Common myeloid progenitor, CD34-positive (primary cell): ENCODE measurements at regions of chr4 and their contacts with region 1.

Region 1: DNA sequence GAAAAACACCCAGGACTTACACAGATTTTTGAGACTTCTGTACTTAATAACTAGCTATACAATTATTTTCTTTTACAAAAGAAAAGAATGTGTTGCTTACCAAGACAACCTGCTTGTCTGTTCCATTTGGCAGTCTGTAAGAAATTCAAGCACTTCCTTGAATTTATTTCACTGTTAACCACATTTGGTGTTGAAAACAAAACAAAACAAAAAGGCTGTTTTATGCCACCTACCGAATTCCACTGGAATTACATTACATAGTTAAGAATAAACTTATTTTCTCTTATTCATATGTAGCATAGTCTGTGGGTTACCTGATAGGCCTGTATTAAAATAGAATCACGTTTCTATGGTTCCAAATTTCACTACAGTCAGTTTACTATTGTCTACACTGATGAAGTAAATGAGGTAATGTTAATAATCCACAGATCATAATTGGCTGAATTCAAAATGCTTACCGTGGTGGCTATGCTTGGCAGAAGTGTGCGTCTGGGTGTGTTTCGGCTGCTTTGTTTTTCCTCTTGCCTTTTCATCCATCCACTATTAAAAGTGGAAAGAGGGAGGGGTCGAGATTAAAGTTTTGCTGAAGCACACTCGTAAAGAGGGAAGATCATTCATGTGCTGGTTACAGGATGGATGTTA is at the start of gene TLR1:
- DNase-seq: peak; percentile 73 to 92 (median 92)
- H3K4me3 ChIP-seq: peak within 1 kb of the TSS in 6 of 7 experiments; percentile 58 to 78 (median 73)
- H3K27ac ChIP-seq: peak within 1 kb of the TSS; percentile 73 to 82
- H3K4me1 ChIP-seq: peaks cover 14 to 31% (median 24%) of the 10 kb centered on the region in 4 experiments
- H3K27me3 ChIP-seq: no peaks in the 10 kb centered on the region

Region 2: GRCh38 chr4:38788327-38788726 is 16.4 kb before region 1 on chr4:
- CTCF ChIA-PET with region 1: interaction called, 55 read pairs
- POLR2A ChIA-PET with region 1: no interaction called
- DNase-seq: no peak
- H3K4me3 ChIP-seq: no peak overlapping the region
- H3K27ac ChIP-seq: no peak overlapping the region
- H3K4me1 ChIP-seq: peaks cover 0 to 25% (median 13%) of the 10 kb centered on the region in 4 experiments
- H3K27me3 ChIP-seq: no peaks in the 10 kb centered on the region